K562 (cell line): ENCODE measurements at regions of chr10 and their contacts with region 1.

Region 1: DNA sequence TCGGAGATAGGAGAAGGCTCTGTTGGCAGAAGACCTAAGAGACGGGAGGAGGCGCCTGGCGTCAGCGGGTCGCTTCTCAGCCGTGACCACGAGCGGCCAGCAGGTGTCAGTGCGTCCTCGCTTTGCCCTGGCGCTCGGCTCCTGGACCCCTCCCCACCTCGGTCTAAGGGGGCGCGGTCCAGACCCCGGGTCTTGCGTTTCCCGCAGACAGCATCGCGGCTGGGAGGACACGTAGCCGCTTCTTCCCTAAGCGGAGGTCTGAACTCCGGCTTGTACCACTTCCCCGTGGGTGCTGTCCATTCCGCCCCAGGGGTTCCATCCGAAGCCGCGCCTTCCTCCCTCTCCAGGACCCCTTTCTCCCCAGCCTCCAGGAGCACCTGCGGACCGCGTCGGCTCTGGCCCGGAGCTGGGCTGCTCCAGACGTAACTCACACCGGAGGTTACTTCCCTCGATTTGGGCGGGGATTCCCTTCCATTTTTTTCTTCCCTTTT is 593 bp upstream of the ADRA2A start:
- DNase-seq: peak; percentile 29 to 51 (median 38)
- ATAC-seq: peak; percentile 97
- H3K4me3 ChIP-seq: no peak overlapping the region
- H3K27ac ChIP-seq: no peak overlapping the region
- H3K4me1 ChIP-seq: peaks cover 0 to 9% of the 10 kb centered on the region in 2 experiments; a peak in 1 of 5 replicates
- H3K27me3 ChIP-seq: no peaks in the 10 kb centered on the region
- CTCF ChIP-seq: peak; percentile 70 to 86 (median 74)
- EP300 ChIP-seq: no peak
- POLR2A ChIP-seq: no peak
- RAD21 ChIP-seq: peak; percentile 79 to 82

Region 2: GRCh38 chr10:111207500-111207899 is 131.3 kb after region 1 on chr10:
- CTCF ChIA-PET with region 1: interaction called, 3 read pairs
- POLR2A ChIA-PET with region 1: no interaction called
- in situ Hi-C with region 1: no loop called
- intact Hi-C with region 1: loop called (anchors 1 kb)
- DNase-seq: peak in 2 of 4 experiments; percentile 2 to 9
- ATAC-seq: peak; percentile 48; the same call in 1 of the 3 replicates
- H3K4me3 ChIP-seq: no peak overlapping the region
- H3K27ac ChIP-seq: no peak overlapping the region
- H3K4me1 ChIP-seq: no peaks in the 10 kb centered on the region
- H3K27me3 ChIP-seq: no peaks in the 10 kb centered on the region
- CTCF ChIP-seq: peak; percentile 35 to 47 (median 46); a peak in 3 of 6 replicates
- EP300 ChIP-seq: no peak
- POLR2A ChIP-seq: no peak
- RAD21 ChIP-seq: peak; percentile 56 to 63